PC-9 (cell line): ENCODE measurements at regions of chr19 and their contacts with region 1.

Region 1: GRCh38 chr19:39544226-39544903 is 4.4 kb upstream of the EID2 start:
- DNase-seq: no peak
- H3K4me3 ChIP-seq: no peak overlapping the region
- H3K27ac ChIP-seq: no peak overlapping the region
- H3K4me1 ChIP-seq: no peaks in the 10 kb centered on the region; the same call in 1 of the 2 replicates
- H3K27me3 ChIP-seq: peaks cover 12% of the 10 kb centered on the region; the same call in 1 of the 2 replicates
- CTCF ChIP-seq: no peak

Region 2: GRCh38 chr19:38956264-38956663 is 588.1 kb before region 1 on chr19:
- CTCF ChIA-PET with region 1: no interaction called
- POLR2A ChIA-PET with region 1: interaction called, 13 read pairs
- intact Hi-C with region 1: no loop called
- DNase-seq: no peak
- H3K4me3 ChIP-seq: no peak overlapping the region
- H3K27ac ChIP-seq: no peak overlapping the region
- H3K4me1 ChIP-seq: no peaks in the 10 kb centered on the region
- H3K27me3 ChIP-seq: no peaks in the 10 kb centered on the region
- CTCF ChIP-seq: no peak

Region 3: DNA sequence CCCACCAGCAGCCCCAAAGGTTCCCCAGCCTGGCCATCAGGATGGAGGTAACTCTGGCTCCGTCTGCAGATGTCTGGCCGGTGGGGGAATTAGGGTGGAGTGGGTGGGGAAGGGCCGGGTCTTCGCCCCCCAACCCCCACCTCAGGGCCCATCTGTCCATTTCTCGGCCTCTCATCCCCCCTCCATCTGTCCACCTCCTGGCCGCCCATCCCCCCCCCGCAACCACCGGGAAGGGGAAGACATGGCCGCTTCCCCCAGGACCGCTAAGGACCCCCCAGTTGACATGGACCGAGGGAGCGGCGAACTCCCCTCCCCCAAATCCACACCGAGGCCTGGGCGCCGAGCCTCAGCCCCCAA is 224.5 kb before region 1 on chr19:
- CTCF ChIA-PET with region 1: interaction called, 10 read pairs
- POLR2A ChIA-PET with region 1: no interaction called
- intact Hi-C with region 1: no loop called
- DNase-seq: no peak
- H3K4me3 ChIP-seq: peak overlapping the region; percentile 72
- H3K27ac ChIP-seq: no peak overlapping the region
- H3K4me1 ChIP-seq: peaks cover 11% of the 10 kb centered on the region
- H3K27me3 ChIP-seq: no peaks in the 10 kb centered on the region; the same call in 1 of the 2 replicates
- CTCF ChIP-seq: no peak

Region 4: GRCh38 chr19:39381910-39382611 is 162.3 kb before region 1 on chr19:
- CTCF ChIA-PET with region 1: no interaction called
- POLR2A ChIA-PET with region 1: no interaction called
- intact Hi-C with region 1: no loop called
- DNase-seq: no peak
- H3K4me3 ChIP-seq: no peak overlapping the region
- H3K27ac ChIP-seq: no peak overlapping the region
- H3K4me1 ChIP-seq: no peaks in the 10 kb centered on the region
- H3K27me3 ChIP-seq: no peaks in the 10 kb centered on the region
- CTCF ChIP-seq: no peak